Activated naive CD4-positive, alpha-beta T cell treated with anti-CD3 and anti-CD28 coated beads for 36 hours (primary cell): ENCODE measurements at regions of chr1 and their contacts with region 1.

Region 1: GRCh38 chr1:155063550-155064110 is at the start of gene EFNA4:
- DNase-seq: peak; percentile 89
- H3K4me3 Mint-ChIP-seq: peak within 1 kb of the TSS; percentile 86
- H3K27ac Mint-ChIP-seq: no peak within 1 kb of the TSS
- H3K4me1 Mint-ChIP-seq: peaks cover 30% of the 10 kb centered on the region
- H3K27me3 Mint-ChIP-seq: no peaks in the 10 kb centered on the region
- total RNA-seq, gene EFNA4: 3.3 to 4.5 TPM

Region 2: DNA sequence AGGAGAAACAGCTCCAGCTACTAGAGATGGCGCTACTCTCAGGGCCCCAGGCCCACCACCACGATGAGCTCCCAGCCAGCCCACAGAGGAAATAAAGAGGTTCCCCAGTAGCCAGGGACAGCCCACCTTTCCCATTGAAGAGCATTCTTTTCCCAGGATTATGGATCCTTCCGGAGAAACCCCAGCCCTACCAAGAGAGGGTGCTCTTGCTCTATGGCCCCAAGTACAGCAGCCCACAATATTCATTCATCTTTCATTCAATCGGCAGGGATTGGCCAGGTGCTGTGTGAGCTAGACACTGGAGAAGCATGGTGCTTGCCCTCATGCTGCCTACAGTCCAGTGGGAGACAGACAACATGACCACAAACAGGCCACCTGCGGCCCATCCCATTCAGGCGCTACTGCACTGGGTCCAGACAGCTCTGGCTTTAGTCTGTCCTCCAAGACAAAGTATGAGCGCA is 157.0 kb before region 1 on chr1:
- CTCF ChIA-PET with region 1: no interaction called
- intact Hi-C with region 1: loop called (anchors 2 kb)
- DNase-seq: peak; percentile 8
- H3K4me3 Mint-ChIP-seq: no peak overlapping the region
- H3K27ac Mint-ChIP-seq: no peak overlapping the region
- H3K4me1 Mint-ChIP-seq: no peaks in the 10 kb centered on the region
- H3K27me3 Mint-ChIP-seq: no peaks in the 10 kb centered on the region

Region 3: DNA sequence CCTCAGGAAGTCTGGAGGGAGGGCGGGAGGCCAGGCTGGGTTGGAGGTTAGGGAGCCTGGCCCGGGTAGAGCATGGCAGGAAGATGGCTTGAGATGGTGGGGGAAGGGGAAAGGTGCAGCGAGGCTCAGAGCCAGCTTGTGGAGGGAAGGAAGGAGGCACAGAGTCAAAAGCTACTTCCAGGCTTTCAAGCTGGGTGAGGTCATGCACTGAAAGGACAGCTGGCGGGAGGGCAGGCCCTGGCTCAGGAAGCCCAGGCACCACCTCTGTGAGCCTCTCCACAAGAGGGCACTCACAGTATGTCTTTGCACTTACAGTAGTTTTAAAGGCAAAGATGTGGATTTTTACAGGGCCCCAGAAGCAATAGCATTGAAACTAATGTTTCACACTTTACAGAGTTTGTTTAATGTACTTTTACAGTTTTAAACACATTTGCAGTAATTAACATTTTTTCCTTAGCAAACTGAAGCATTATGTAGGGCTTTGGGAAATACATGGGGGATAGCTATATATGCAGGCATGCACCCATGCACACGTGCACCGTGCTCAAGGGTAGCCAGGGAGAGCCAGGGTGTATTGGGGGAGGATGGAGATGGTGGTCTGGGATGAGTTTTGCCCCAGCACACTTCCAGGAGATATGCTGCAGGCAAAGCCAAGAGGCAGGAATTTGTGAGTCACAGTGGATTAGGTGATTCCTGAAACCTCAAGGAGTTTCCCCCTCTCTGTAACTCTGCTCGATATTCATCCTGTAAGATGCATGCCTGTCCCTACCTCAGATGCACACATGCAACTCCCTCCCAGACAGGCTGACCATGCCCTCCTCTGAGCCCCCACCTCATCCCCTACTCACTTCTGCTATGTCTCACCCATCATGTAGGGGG is 18.6 kb before region 1 on chr1:
- CTCF ChIA-PET with region 1: interaction called, 197 read pairs
- intact Hi-C with region 1: loop called (anchors 1 kb)
- DNase-seq: peak; percentile 79
- H3K4me3 Mint-ChIP-seq: no peak overlapping the region
- H3K27ac Mint-ChIP-seq: no peak overlapping the region
- H3K4me1 Mint-ChIP-seq: peaks cover 19% of the 10 kb centered on the region
- H3K27me3 Mint-ChIP-seq: no peaks in the 10 kb centered on the region

Region 4: GRCh38 chr1:155077758-155078445 is 14.3 kb after region 1 on chr1:
- CTCF ChIA-PET with region 1: interaction called, 75 read pairs
- intact Hi-C with region 1: no loop called
- DNase-seq: no peak
- H3K4me3 Mint-ChIP-seq: no peak overlapping the region
- H3K27ac Mint-ChIP-seq: no peak overlapping the region
- H3K4me1 Mint-ChIP-seq: peaks cover 30% of the 10 kb centered on the region
- H3K27me3 Mint-ChIP-seq: peaks cover 26% of the 10 kb centered on the region